CD8-positive, alpha-beta T cell (primary cell): ENCODE measurements at regions of chr2 and their contacts with region 1.

Region 1: GRCh38 chr2:9490789-9491188 is 16.4 kb downstream of the IAH1 start:
- DNase-seq: no peak
- ATAC-seq: no peak
- H3K4me3 ChIP-seq: no peak overlapping the region
- H3K4me3 Mint-ChIP-seq: no peak overlapping the region
- H3K27ac ChIP-seq: no peak overlapping the region
- H3K27ac Mint-ChIP-seq: peak overlapping the region; percentile 69
- H3K4me1 ChIP-seq: no peaks in the 10 kb centered on the region
- H3K4me1 Mint-ChIP-seq: peaks cover 11% of the 10 kb centered on the region
- H3K27me3 ChIP-seq: no peaks in the 10 kb centered on the region
- H3K27me3 Mint-ChIP-seq: no peaks in the 10 kb centered on the region
- CTCF ChIP-seq: no peak

Region 2: GRCh38 chr2:7649461-7650228 is 1841.1 kb before region 1 on chr2:
- CTCF ChIA-PET with region 1: no interaction called
- POLR2A ChIA-PET with region 1: no interaction called
- intact Hi-C with region 1: no loop called
- DNase-seq: peak in 7 of 9 experiments; percentile 11 to 63 (median 48)
- ATAC-seq: peak; percentile 91
- H3K4me3 ChIP-seq: no peak overlapping the region
- H3K4me3 Mint-ChIP-seq: peak overlapping the region; percentile 64
- H3K27ac ChIP-seq: peak overlapping the region; percentile 37 to 65
- H3K27ac Mint-ChIP-seq: peak overlapping the region; percentile 93
- H3K4me1 ChIP-seq: peaks cover 30% of the 10 kb centered on the region
- H3K4me1 Mint-ChIP-seq: peaks cover 44% of the 10 kb centered on the region
- H3K27me3 ChIP-seq: no peaks in the 10 kb centered on the region
- H3K27me3 Mint-ChIP-seq: no peaks in the 10 kb centered on the region
- CTCF ChIP-seq: no peak

Region 3: DNA sequence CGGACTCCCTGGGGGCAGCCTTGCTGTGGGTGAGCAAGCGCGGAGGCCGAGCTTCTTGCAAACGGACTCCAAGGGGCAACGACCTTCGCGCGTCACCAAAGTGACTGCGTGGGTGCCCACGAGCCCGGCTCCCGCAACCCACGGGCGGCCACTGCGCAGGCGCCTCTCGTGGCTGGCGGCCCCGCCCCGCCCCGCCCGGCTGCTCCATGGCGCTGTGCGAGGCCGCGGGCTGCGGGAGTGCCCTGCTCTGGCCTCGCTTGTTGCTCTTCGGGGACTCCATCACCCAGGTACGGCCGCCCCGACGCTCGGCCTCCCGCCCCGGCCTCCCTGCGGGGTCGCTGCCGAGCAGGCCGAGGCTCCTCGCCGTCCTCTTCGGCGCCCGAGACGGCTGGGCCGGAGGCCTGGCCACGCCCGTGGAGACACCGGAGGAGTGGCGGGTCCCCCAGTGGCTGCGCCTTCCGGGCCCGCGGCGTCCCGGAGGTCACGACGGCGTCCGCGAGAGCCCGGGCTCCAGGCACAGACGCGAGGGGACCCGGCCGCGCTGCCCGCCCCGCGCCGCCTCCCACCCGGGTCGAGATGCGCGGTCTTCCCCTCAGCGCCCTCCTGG is 16.3 kb before region 1 on chr2 and contains the start of gene IAH1:
- CTCF ChIA-PET with region 1: interaction called, 10 read pairs
- POLR2A ChIA-PET with region 1: interaction called, 3 read pairs
- intact Hi-C with region 1: no loop called
- DNase-seq: peak; percentile 58 to 86 (median 74)
- ATAC-seq: peak; percentile 80
- H3K4me3 ChIP-seq: peak within 1 kb of the TSS; percentile 83 to 91
- H3K4me3 Mint-ChIP-seq: peak within 1 kb of the TSS; percentile 84
- H3K27ac ChIP-seq: peak within 1 kb of the TSS; percentile 95 to 97
- H3K27ac Mint-ChIP-seq: peak within 1 kb of the TSS; percentile 90
- H3K4me1 ChIP-seq: peaks cover 18% of the 10 kb centered on the region
- H3K4me1 Mint-ChIP-seq: peaks cover 50% of the 10 kb centered on the region
- H3K27me3 ChIP-seq: no peaks in the 10 kb centered on the region
- H3K27me3 Mint-ChIP-seq: no peaks in the 10 kb centered on the region
- CTCF ChIP-seq: no peak
- total RNA-seq, gene IAH1: 48.2 to 52.5 TPM